HEK293T (cell line): ENCODE measurements at regions of chr1 and their contacts with region 1.

Region 1: GRCh38 chr1:171644805-171645483 is 7.5 kb downstream of the MYOC start:
- DNase-seq: peak; percentile 85

Region 2: GRCh38 chr1:171654942-171655745 is 10.2 kb after region 1 on chr1:
- CTCF ChIA-PET with region 1: interaction called, 14 read pairs
- POLR2A ChIA-PET with region 1: no interaction called
- DNase-seq: peak; percentile 85

Region 3: DNA sequence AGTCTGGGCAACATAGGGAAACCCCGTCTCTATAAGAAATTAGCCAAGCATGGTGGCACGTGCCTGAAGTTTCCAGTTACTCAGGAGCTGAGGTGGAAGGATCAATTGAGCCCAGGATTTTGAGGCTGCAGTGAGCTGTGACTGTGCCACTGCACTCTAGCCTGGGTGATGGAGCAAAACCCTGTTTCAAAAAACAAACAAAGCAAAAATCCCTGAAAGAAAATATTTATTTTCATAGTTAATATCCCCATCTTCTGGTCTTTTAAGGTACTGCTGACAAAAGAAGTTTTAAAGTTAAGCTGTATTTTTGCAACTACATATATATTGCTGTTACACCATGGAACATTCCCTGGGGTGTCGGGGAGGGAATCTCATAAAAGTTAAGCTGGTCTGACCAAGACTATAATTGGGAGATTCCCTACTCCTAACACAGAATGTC is 70.9 kb after region 1 on chr1:
- CTCF ChIA-PET with region 1: interaction called, 13 read pairs
- POLR2A ChIA-PET with region 1: no interaction called
- DNase-seq: no peak

Region 4: GRCh38 chr1:171741872-171742576 is 97.1 kb after region 1 on chr1 and contains the start of gene VAMP4:
- CTCF ChIA-PET with region 1: interaction called, 17 read pairs
- POLR2A ChIA-PET with region 1: interaction called, 6 read pairs
- DNase-seq: peak; percentile 92

Region 5: GRCh38 chr1:171801487-171801891 is 156.5 kb after region 1 on chr1:
- CTCF ChIA-PET with region 1: interaction called, 10 read pairs
- POLR2A ChIA-PET with region 1: no interaction called
- DNase-seq: peak; percentile 72